Aorta (tissue), 5 donors: ENCODE measurements at regions of chr9 and their contacts with region 1.

Region 1: DNA sequence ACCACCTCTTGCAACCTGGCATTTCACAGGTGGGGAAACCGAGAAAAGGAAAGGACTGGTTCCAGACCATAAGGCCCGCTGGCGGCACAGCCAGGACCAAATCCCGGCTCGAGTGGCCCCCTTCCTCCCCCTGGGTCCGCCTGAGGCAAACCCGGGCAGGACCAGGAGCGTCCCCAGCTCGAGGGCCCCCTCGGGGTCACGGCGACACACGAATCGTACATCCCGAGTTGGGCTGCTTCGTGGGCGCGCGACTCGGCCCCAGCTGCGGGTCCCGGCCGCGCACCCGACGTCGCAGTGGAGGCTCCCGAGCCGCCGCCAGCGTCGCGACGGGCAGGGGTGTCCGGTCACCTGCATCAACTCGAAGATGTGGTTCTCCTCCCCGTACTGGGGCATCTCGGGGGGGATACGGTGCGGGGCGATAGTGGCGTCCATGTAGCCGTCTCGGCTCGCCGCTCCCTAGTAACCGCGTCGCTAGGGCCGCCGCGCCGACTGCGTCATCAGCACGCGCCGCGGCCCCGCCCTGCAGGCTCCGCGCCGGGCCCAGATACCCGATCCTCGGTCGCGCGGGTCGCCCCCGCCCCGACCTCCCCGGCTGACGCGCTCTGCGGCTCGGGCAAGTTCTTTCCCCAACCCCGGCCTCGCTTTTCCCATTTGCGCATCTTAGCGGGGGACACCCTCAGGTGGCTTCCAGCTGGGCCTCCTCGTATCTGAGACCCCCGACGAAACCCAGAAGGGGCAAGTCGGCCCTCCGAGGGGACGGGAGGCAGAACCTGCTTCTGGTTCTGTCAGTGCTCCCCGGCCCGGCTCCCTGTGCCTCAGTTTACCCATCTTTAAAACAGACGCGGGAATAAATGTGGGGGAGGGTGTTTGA is at the start of gene AK8:
- DNase-seq: peak; percentile 76 to 92
- ATAC-seq: peak; percentile 95
- H3K4me3 ChIP-seq: peak within 1 kb of the TSS; percentile 71
- H3K27ac ChIP-seq: peak within 1 kb of the TSS in 1 of 2 donors; percentile 11
- H3K4me1 ChIP-seq: no peaks in the 10 kb centered on the region
- H3K27me3 ChIP-seq: no peaks in the 10 kb centered on the region
- total RNA-seq, gene AK8: 0.71 to 0.72 TPM

Region 2: GRCh38 chr9:132669698-132670456 is 208.2 kb before region 1 on chr9 and contains the start of gene DDX31:
- intact Hi-C with region 1: loop called (anchors 1 to 10 kb)
- DNase-seq: peak; percentile 91 to 96
- ATAC-seq: peak; percentile 98
- H3K4me3 ChIP-seq: peak within 1 kb of the TSS; percentile 57 to 70
- H3K27ac ChIP-seq: peak within 1 kb of the TSS in 1 of 2 donors; percentile 66
- H3K4me1 ChIP-seq: peaks cover 0 to 9% of the 10 kb centered on the region in 2 donors
- H3K27me3 ChIP-seq: no peaks in the 10 kb centered on the region
- total RNA-seq, gene DDX31: 7.8 to 13.3 TPM

Region 3: GRCh38 chr9:132944302-132945185 is 66.5 kb after region 1 on chr9 and contains the start of gene TSC1:
- intact Hi-C with region 1: loop called in 1 of 2 experiments (anchors 5 kb)
- DNase-seq: peak; percentile 98 to 99
- ATAC-seq: peak; percentile 97
- H3K4me3 ChIP-seq: peak within 1 kb of the TSS; percentile 75 to 85
- H3K27ac ChIP-seq: peak within 1 kb of the TSS in 1 of 2 donors; percentile 62
- H3K4me1 ChIP-seq: no peaks in the 10 kb centered on the region
- H3K27me3 ChIP-seq: no peaks in the 10 kb centered on the region
- total RNA-seq, gene TSC1: 37.4 to 61.3 TPM